ENCODE measurements at regions of chr5 and their contacts with region 1.

Region 1: DNA sequence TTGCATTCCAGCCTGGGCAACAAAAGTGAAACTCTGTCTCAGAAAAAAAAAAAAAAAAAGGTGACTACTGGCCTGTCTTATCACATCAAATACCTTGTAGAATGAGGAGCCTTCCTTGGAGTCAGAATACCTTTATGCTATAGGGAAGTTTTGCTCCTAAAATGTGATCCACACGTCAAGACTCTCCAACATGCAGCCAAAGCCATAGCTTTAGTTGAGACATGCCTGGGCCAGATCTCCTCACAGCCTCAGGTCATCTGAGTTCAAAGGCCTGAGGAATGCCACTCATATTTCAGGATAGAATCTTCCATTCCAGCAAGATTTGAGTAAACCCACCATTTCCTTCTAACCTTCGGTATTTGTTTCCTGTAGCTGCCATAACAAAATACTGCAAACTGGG is 13.7 kb upstream of the SOWAHA start:
- DNase-seq: no peak
- ATAC-seq: no peak
- H3K4me3 ChIP-seq: no peak overlapping the region
- H3K27ac ChIP-seq: no peak overlapping the region
- H3K4me1 ChIP-seq: no peaks in the 10 kb centered on the region
- H3K27me3 ChIP-seq: no peaks in the 10 kb centered on the region; the same call in 1 of the 2 replicates
- CTCF ChIP-seq: no peak

Region 2: GRCh38 chr5:132369474-132370180 is 429.8 kb before region 1 on chr5 and contains the start of gene SLC22A5:
- CTCF ChIA-PET with region 1: no interaction called
- POLR2A ChIA-PET with region 1: interaction called, 15 read pairs
- in situ Hi-C with region 1: no loop called
- intact Hi-C with region 1: no loop called
- DNase-seq: no peak
- ATAC-seq: peak; percentile 96
- H3K4me3 ChIP-seq: peak within 1 kb of the TSS; percentile 66 to 79
- H3K27ac ChIP-seq: peak within 1 kb of the TSS; percentile 82
- H3K4me1 ChIP-seq: peaks cover 24% of the 10 kb centered on the region
- H3K27me3 ChIP-seq: no peaks in the 10 kb centered on the region
- CTCF ChIP-seq: no peak
- total RNA-seq, gene SLC22A5: 9.5 TPM

Measured in Panc1 (cell line).